ENCODE measurements at regions of chr9 and their contacts with region 1.

Region 1: DNA sequence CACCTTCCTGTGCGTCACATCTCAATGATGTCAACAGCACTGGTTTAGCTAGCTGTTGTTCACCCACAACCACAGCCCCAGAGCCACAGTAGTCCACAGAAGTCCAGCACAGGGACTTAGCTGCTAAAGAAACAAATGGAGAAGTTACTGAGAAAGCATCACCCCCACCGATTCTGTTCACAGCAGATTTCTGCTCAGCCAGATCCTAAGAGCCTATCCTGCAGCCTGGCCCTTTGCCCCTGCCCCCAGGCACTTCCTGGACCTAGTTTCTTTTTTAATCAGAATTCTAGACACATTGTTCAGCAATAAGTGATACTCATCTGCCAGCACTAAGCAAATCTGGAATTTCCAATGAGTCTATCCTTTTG is 7.4 kb downstream of the B4GALT1 start:
- DNase-seq: peak in 1 of 2 experiments; percentile 66
- ATAC-seq: peak in 1 of 2 experiments; percentile 3; a peak in 2 of 6 replicates
- H3K4me3 ChIP-seq: peak overlapping the region; percentile 32
- H3K27ac ChIP-seq: peak overlapping the region; percentile 95 to 97
- H3K4me1 ChIP-seq: peaks cover 90% of the 10 kb centered on the region
- CTCF ChIP-seq: no peak
- EP300 ChIP-seq: no peak
- POLR2A ChIP-seq: no peak
- RAD21 ChIP-seq: no peak

Region 2: DNA sequence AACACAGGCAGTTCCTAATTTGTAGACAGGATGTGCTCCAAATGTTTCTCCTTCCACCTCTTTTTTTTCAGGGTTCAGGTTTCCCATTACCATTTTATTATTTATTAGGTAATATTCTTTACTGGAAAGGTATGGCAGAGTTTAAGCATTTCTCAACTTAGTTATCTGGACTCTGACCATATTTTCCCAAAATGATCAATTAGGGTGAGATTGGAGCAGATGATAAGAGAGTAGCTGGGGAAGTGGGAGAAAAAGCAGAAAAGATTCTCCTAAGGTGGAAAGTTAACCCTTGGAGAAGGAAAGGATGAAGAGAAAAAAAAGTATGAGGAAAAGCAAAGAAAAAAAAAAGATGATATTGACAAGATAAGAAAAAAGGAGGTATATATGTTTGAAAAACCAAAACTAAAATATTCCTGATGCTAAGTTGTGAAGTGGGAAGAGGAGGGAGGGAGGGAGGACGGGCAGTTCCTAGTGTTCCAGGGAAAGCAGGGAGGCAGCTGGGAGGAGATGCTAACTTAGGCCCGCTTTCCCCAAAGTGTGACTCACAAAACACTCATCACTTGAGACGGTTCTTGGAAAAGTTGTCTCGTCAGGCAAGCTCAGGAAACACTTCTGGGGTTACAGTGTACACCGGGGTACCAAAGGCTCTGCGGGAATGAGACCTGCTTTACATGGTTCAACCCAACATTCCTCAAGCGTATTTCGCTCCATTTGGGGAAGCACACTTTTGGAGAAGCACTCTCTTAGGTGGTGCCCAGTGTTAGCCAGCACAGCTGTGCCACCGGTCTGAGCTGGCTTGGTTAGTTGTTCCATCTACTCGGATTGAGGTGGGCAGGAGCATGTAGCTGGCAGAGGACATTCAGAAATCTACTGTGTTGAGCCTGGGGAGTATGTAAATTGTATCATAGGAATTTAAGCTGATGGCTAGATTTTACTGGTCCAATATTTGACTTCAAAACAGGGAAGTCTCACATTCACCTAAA is 27.7 kb before region 1 on chr9:
- CTCF ChIA-PET with region 1: interaction called, 11 read pairs
- POLR2A ChIA-PET with region 1: interaction called, 5 read pairs
- DNase-seq: peak; percentile 52 to 65
- ATAC-seq: peak; percentile 68 to 75; a peak in 5 of 6 replicates
- H3K4me3 ChIP-seq: no peak overlapping the region
- H3K27ac ChIP-seq: peak overlapping the region; percentile 27 to 67; a peak in 5 of 6 replicates
- H3K4me1 ChIP-seq: peaks cover 79% of the 10 kb centered on the region
- CTCF ChIP-seq: no peak
- EP300 ChIP-seq: no peak
- POLR2A ChIP-seq: no peak
- RAD21 ChIP-seq: no peak

Region 3: GRCh38 chr9:33192493-33193255 is 32.9 kb after region 1 on chr9:
- CTCF ChIA-PET with region 1: no interaction called
- POLR2A ChIA-PET with region 1: no interaction called
- DNase-seq: no peak
- ATAC-seq: peak in 1 of 2 experiments; percentile 38; a peak in 1 of 6 replicates
- H3K4me3 ChIP-seq: no peak overlapping the region
- H3K27ac ChIP-seq: no peak overlapping the region
- H3K4me1 ChIP-seq: no peaks in the 10 kb centered on the region
- CTCF ChIP-seq: no peak
- EP300 ChIP-seq: no peak
- POLR2A ChIP-seq: no peak
- RAD21 ChIP-seq: no peak

Measured in A549 (cell line).